ENCODE measurements at regions of chr2 and their contacts with region 1.

Region 1: DNA sequence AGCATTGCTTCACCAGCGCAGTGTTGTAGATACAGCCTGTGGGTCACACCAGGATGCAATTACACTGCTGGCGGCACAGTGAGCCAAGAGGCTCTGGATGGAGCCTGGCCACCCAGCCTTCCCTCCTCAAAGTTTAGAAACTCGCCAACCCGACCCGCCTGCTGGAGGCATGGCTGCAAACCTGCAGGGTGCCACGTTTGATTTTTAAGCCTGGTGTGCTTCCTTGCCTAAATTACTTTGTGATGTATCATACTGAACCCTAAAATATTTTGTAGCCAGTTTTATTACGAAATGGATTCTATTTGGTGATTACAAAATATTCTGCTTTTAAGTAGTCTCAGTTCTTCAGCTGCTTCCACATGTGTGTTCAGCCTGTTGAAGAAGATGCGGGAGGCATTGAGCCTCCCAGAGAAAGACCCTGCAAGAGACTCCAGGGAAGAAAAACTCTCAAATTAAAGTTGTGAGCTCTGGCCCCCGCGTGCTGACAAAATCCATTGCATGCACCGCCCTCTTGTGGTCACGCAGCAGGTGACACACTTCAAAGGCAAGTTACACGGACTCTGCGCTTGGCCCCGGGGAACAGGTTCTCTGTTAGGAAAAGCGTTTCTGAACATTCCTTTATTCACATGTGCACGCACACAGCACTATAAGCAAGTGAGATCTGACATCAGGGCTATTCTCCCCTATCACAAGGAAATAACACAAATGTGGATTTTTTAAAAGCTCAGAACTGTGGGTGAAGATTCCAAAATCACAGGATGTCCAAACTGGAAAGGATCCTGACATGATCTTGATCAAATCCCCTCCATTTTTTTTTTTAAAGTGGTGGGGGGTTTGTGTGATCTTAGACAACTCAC is 63.0 kb upstream of the TWIST2 start:
- DNase-seq: peak; percentile 60 to 76
- ATAC-seq: peak; percentile 83 to 94; a peak in 5 of 6 replicates
- H3K4me3 ChIP-seq: no peak overlapping the region
- H3K27ac ChIP-seq: peak overlapping the region; percentile 54 to 68
- H3K4me1 ChIP-seq: peaks cover 9% of the 10 kb centered on the region; the same call in 2 of the 3 replicates
- CTCF ChIP-seq: peak; percentile 93
- EP300 ChIP-seq: no peak
- POLR2A ChIP-seq: no peak
- RAD21 ChIP-seq: peak; percentile 95 to 96

Region 2: GRCh38 chr2:238362626-238363025 is 422.3 kb before region 1 on chr2:
- CTCF ChIA-PET with region 1: interaction called, 79 read pairs
- POLR2A ChIA-PET with region 1: no interaction called
- DNase-seq: no peak
- ATAC-seq: no peak
- H3K4me3 ChIP-seq: no peak overlapping the region
- H3K27ac ChIP-seq: no peak overlapping the region
- H3K4me1 ChIP-seq: peaks cover under 1% of the 10 kb centered on the region; the same call in 2 of the 3 replicates
- CTCF ChIP-seq: no peak
- EP300 ChIP-seq: no peak
- POLR2A ChIP-seq: no peak
- RAD21 ChIP-seq: no peak

Region 3: GRCh38 chr2:238379096-238379810 is 405.6 kb before region 1 on chr2:
- CTCF ChIA-PET with region 1: interaction called, 11 read pairs
- POLR2A ChIA-PET with region 1: no interaction called
- DNase-seq: no peak
- ATAC-seq: no peak
- H3K4me3 ChIP-seq: no peak overlapping the region
- H3K27ac ChIP-seq: no peak overlapping the region
- H3K4me1 ChIP-seq: no peaks in the 10 kb centered on the region
- CTCF ChIP-seq: no peak
- EP300 ChIP-seq: no peak
- POLR2A ChIP-seq: 0 out of 2 replicates have a peak, but pooled peaks have one; percentile 8
- RAD21 ChIP-seq: no peak

Region 4: DNA sequence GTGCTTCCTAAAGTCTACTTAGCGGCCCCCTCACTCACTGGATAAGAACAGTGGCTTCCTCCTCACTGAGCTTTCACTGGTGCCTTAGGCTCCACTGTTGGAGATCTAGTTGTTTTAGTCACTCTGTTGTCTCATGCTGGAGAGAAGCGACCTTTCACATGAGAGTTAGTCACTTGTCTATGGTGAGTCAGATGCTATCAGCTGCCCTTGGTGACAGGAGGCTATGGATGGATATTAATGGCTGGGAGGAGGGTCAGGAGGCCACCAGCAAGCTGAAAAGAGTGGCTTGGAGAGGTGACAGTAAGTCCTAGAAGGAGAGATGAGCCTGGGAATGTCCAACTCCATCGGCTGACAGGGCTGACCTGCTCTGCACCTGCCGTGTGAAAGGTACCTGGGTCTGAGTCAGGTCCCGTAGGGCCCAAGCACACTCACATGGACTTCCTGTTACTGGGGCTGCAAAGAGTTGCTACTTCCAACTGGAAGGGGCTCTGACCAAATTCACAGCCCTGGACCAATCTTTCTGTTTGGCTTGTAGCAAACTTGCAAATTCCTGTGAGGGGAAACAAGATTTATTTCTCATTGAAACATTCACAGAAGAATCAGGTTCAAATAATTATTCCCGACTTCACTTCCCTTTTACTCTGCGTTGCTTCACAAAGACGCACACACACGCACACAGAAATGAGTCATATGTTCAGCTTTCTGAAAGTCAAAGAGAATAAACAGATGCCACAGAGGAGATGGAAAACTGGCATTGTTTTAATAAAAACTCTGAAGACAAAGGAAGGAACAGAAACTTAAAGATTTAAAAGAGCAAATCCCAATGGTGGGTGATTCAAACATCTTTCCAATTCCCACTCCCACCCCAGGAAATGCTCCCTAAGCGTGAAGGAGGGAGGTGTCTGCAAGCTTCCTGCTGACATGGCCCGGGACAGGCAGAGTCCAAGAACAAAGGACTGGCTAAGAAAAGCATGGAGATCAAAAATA is 140.5 kb before region 1 on chr2:
- CTCF ChIA-PET with region 1: interaction called, 13 read pairs
- POLR2A ChIA-PET with region 1: no interaction called
- DNase-seq: peak; percentile 78 to 84
- ATAC-seq: peak; percentile 91 to 97
- H3K4me3 ChIP-seq: no peak overlapping the region
- H3K27ac ChIP-seq: peak overlapping the region; percentile 81 to 86
- H3K4me1 ChIP-seq: peaks cover 33% of the 10 kb centered on the region
- CTCF ChIP-seq: no peak
- EP300 ChIP-seq: peak in 1 of 2 experiments; percentile 25; a peak in 1 of 5 replicates
- POLR2A ChIP-seq: no peak
- RAD21 ChIP-seq: no peak; a peak in 1 of 5 replicates

Region 5: GRCh38 chr2:238771218-238771617 is 13.7 kb before region 1 on chr2:
- CTCF ChIA-PET with region 1: interaction called, 13 read pairs
- POLR2A ChIA-PET with region 1: no interaction called
- DNase-seq: peak in 1 of 2 experiments; percentile 25
- ATAC-seq: no peak
- H3K4me3 ChIP-seq: no peak overlapping the region
- H3K27ac ChIP-seq: no peak overlapping the region
- H3K4me1 ChIP-seq: no peaks in the 10 kb centered on the region
- CTCF ChIP-seq: no peak
- EP300 ChIP-seq: no peak
- POLR2A ChIP-seq: no peak
- RAD21 ChIP-seq: no peak

Measured in A549 (cell line).